Left ventricle myocardium inferior (tissue), 1 donor: ENCODE measurements at regions of chr10 and their contacts with region 1.

Region 1: GRCh38 chr10:97608991-97609561 is 19.6 kb downstream of the C10orf62 start:
- DNase-seq: peak; percentile 78
- H3K4me3 ChIP-seq: no peak overlapping the region
- H3K27ac ChIP-seq: peak overlapping the region; percentile 84
- H3K4me1 ChIP-seq: peaks cover 41% of the 10 kb centered on the region
- H3K27me3 ChIP-seq: no peaks in the 10 kb centered on the region
- CTCF ChIP-seq: no peak

Region 2: DNA sequence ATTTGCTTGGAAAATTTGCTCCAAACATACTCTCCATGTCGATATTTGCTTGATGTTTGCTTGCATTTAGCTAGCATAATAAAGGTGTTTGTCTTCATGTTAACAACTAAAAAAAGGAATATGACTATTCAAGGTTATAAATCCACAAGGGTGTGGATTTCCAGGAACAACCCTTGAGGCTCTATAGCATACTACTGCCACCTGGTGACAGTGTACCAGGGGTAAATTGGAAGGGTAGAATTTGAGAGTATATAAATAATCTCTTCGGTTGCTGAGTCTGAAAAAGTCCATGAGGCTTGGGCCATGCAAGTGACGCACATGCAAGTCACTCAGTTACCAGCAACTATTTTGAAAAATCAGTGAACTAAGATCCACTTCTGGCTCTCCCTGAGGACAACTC is 491.7 kb before region 1 on chr10:
- intact Hi-C with region 1: no loop called
- DNase-seq: no peak
- H3K4me3 ChIP-seq: no peak overlapping the region
- H3K27ac ChIP-seq: no peak overlapping the region
- H3K4me1 ChIP-seq: no peaks in the 10 kb centered on the region
- H3K27me3 ChIP-seq: peaks cover 46% of the 10 kb centered on the region
- CTCF ChIP-seq: peak; percentile 66

Region 3: DNA sequence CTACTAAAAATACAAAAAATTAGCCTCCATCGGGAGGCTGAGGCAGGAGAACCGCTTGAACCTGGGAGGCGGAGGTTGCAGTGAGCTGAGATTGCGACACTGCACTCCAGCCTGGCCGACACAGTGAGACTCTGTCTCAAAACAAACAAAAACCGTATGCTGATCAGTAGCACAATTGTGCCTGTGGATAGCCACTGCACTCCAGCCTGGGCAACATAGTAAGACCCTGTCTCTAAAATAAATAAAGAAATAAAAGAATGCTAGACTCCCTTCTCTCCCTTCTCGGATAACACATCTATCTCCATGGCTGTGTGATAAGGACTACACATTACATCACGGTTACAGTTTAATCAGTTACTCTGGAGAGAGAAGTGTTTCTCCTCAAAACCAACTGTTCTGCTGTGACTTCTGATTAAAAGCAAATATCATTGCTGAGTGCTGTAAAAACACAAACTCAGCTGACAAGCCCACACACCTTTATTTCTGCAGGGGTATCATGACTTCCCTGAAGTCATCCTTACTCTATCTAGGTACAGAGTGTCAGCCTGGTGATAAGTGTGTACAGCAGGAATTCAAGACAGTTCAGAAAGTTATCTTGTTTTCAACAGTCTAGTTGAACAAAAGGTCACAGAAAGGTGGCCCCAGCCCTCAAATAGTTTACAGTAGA is 311.4 kb before region 1 on chr10:
- intact Hi-C with region 1: no loop called
- DNase-seq: no peak
- H3K4me3 ChIP-seq: no peak overlapping the region
- H3K27ac ChIP-seq: no peak overlapping the region
- H3K4me1 ChIP-seq: no peaks in the 10 kb centered on the region
- H3K27me3 ChIP-seq: no peaks in the 10 kb centered on the region
- CTCF ChIP-seq: no peak

Region 4: GRCh38 chr10:97572214-97572989 is 36.7 kb before region 1 on chr10 and contains the start of gene ANKRD2:
- intact Hi-C with region 1: loop called (anchors 5 kb)
- DNase-seq: peak; percentile 86
- H3K4me3 ChIP-seq: peak within 1 kb of the TSS; percentile 58
- H3K27ac ChIP-seq: peak within 1 kb of the TSS; percentile 91
- H3K4me1 ChIP-seq: peaks cover 42% of the 10 kb centered on the region
- H3K27me3 ChIP-seq: no peaks in the 10 kb centered on the region
- CTCF ChIP-seq: peak; percentile 88
- total RNA-seq, gene ANKRD2: 969 TPM

Region 5: GRCh38 chr10:97731346-97732051 is 122.4 kb after region 1 on chr10:
- intact Hi-C with region 1: no loop called
- DNase-seq: no peak
- H3K4me3 ChIP-seq: no peak overlapping the region
- H3K27ac ChIP-seq: no peak overlapping the region
- H3K4me1 ChIP-seq: peaks cover 13% of the 10 kb centered on the region
- H3K27me3 ChIP-seq: no peaks in the 10 kb centered on the region
- CTCF ChIP-seq: peak; percentile 88